H1 (cell line): ENCODE measurements at regions of chr12 and their contacts with region 1.

Region 1: GRCh38 chr12:107131832-107132616 is 38.7 kb upstream of the CRY1 start:
- DNase-seq: peak; percentile 7 to 50
- H3K4me3 ChIP-seq: no peak overlapping the region
- H3K27ac ChIP-seq: no peak overlapping the region
- H3K4me1 ChIP-seq: peaks cover 0 to 5% (median 1%) of the 10 kb centered on the region in 4 experiments; a peak in 2 of 7 replicates
- H3K27me3 ChIP-seq: no peaks in the 10 kb centered on the region
- CTCF ChIP-seq: peak in 2 of 3 experiments; percentile 76 to 78; a peak in 3 of 4 replicates
- EP300 ChIP-seq: no peak
- POLR2A ChIP-seq: no peak
- RAD21 ChIP-seq: peak; percentile 94 to 95

Region 2: GRCh38 chr12:106831699-106832098 is 300.3 kb before region 1 on chr12:
- CTCF ChIA-PET with region 1: no interaction called
- POLR2A ChIA-PET with region 1: no interaction called
- DNase-seq: no peak
- H3K4me3 ChIP-seq: no peak overlapping the region
- H3K27ac ChIP-seq: no peak overlapping the region
- H3K4me1 ChIP-seq: peaks cover 0 to 6% (median 3%) of the 10 kb centered on the region in 4 experiments; a peak in 3 of 7 replicates
- H3K27me3 ChIP-seq: no peaks in the 10 kb centered on the region
- CTCF ChIP-seq: no peak
- EP300 ChIP-seq: no peak
- POLR2A ChIP-seq: no peak
- RAD21 ChIP-seq: no peak

Region 3: DNA sequence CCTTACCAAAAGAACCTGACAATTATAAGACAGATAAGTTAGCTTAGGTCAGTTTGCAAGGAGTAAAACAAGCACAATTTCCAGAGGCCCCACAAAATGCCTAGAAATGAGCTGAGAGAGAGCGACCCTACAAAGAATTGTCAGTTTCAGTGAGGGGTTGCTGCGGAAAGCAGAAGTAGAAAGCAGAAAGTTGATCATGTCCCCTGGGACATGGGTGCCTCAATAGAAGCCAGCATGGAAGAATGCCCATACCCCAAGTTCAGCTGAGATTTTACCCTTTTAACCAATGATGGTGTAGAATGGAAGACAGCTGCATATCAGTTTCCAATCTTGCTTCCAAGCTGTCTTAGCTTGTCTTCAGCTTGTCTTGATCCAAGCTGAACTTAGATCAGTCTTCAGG is 16.9 kb before region 1 on chr12:
- CTCF ChIA-PET with region 1: interaction called, 20 read pairs
- POLR2A ChIA-PET with region 1: no interaction called
- DNase-seq: no peak
- H3K4me3 ChIP-seq: no peak overlapping the region
- H3K27ac ChIP-seq: no peak overlapping the region
- H3K4me1 ChIP-seq: no peaks in the 10 kb centered on the region
- H3K27me3 ChIP-seq: no peaks in the 10 kb centered on the region
- CTCF ChIP-seq: no peak
- EP300 ChIP-seq: no peak
- POLR2A ChIP-seq: no peak
- RAD21 ChIP-seq: no peak

Region 4: DNA sequence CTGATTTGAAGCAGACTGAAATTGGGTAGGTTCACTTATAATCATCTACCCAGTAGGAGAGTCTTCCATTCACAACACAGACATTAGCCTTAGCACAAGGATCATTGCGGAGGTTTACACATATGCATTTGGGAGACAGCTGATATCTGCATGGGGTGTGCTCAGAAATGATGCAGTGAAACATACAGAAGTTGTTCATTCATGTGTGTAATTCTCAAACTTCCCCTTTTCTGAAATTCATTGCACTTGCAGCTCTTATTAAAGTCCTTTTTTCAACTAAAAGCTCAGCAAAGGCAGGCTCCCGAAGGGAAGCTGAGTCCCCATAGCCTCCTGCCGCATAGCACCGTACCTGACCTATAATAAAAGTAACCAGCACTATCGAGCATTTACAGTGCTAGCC is 179.7 kb after region 1 on chr12:
- CTCF ChIA-PET with region 1: interaction called, 10 read pairs
- POLR2A ChIA-PET with region 1: no interaction called
- DNase-seq: no peak
- H3K4me3 ChIP-seq: no peak overlapping the region
- H3K27ac ChIP-seq: no peak overlapping the region
- H3K4me1 ChIP-seq: no peaks in the 10 kb centered on the region; a peak in 1 of 7 replicates
- H3K27me3 ChIP-seq: peaks cover 0 to 1% (median 0%) of the 10 kb centered on the region in 4 experiments; a peak in 1 of 7 replicates
- CTCF ChIP-seq: no peak
- EP300 ChIP-seq: no peak
- POLR2A ChIP-seq: no peak
- RAD21 ChIP-seq: no peak

Region 5: GRCh38 chr12:107377596-107378385 is 245.8 kb after region 1 on chr12:
- CTCF ChIA-PET with region 1: interaction called, 11 read pairs
- POLR2A ChIA-PET with region 1: no interaction called
- DNase-seq: no peak
- H3K4me3 ChIP-seq: no peak overlapping the region
- H3K27ac ChIP-seq: no peak overlapping the region
- H3K4me1 ChIP-seq: peaks cover 0 to 9% (median 4%) of the 10 kb centered on the region in 4 experiments; a peak in 3 of 7 replicates
- H3K27me3 ChIP-seq: no peaks in the 10 kb centered on the region
- CTCF ChIP-seq: no peak
- EP300 ChIP-seq: no peak
- POLR2A ChIP-seq: no peak
- RAD21 ChIP-seq: no peak

Region 6: DNA sequence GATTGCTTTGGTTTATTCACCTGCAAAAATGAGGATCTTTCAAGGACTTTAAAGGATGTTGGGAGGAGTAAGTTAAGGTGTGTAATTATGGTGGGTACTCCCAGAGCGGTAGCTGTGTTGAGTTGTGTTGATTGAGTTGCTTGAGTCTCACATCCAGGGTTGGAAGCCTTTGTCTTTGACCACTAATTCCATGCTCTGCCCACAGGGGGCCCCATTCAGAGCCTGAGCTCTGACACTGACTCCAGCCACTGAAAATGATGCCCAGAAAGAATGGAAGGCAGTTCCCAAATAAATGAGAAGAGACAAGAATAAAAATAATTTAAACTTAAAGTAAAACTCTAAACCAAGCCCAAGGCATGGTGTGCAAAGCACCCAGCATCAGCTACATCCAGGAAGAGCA is 316.2 kb after region 1 on chr12:
- CTCF ChIA-PET with region 1: interaction called, 10 read pairs
- POLR2A ChIA-PET with region 1: no interaction called
- DNase-seq: peak in 1 of 2 experiments; percentile 76
- H3K4me3 ChIP-seq: no peak overlapping the region
- H3K27ac ChIP-seq: no peak overlapping the region
- H3K4me1 ChIP-seq: peaks cover 0 to 7% (median 2%) of the 10 kb centered on the region in 4 experiments; a peak in 1 of 7 replicates
- H3K27me3 ChIP-seq: no peaks in the 10 kb centered on the region
- CTCF ChIP-seq: peak; percentile 40 to 70 (median 70)
- EP300 ChIP-seq: no peak
- POLR2A ChIP-seq: no peak
- RAD21 ChIP-seq: peak; percentile 50 to 64

Region 7: GRCh38 chr12:107622005-107622404 is 490.0 kb after region 1 on chr12:
- CTCF ChIA-PET with region 1: interaction called, 21 read pairs
- POLR2A ChIA-PET with region 1: no interaction called
- DNase-seq: peak in 1 of 2 experiments; percentile 80
- H3K4me3 ChIP-seq: no peak overlapping the region
- H3K27ac ChIP-seq: no peak overlapping the region
- H3K4me1 ChIP-seq: no peaks in the 10 kb centered on the region
- H3K27me3 ChIP-seq: no peaks in the 10 kb centered on the region
- CTCF ChIP-seq: peak; percentile 75 to 85 (median 76)
- EP300 ChIP-seq: no peak
- POLR2A ChIP-seq: no peak
- RAD21 ChIP-seq: peak; percentile 69 to 79